Activated CD8-positive, alpha-beta memory T cell treated with anti-CD3 and anti-CD28 coated beads, Interleukin-2, amount 10 ng/mL, durations not matched to agents 7 days and 5 days (primary cell): ENCODE measurements at regions of chr4 and their contacts with region 1.

Region 1: GRCh38 chr4:6673660-6674499 is 19.8 kb upstream of the S100P start:
- DNase-seq: peak; percentile 96
- ATAC-seq: peak; percentile 79
- H3K4me3 Mint-ChIP-seq: peak overlapping the region; percentile 91
- H3K27ac Mint-ChIP-seq: peak overlapping the region; percentile 98
- H3K4me1 Mint-ChIP-seq: peaks cover 47% of the 10 kb centered on the region
- H3K27me3 Mint-ChIP-seq: no peaks in the 10 kb centered on the region

Region 2: DNA sequence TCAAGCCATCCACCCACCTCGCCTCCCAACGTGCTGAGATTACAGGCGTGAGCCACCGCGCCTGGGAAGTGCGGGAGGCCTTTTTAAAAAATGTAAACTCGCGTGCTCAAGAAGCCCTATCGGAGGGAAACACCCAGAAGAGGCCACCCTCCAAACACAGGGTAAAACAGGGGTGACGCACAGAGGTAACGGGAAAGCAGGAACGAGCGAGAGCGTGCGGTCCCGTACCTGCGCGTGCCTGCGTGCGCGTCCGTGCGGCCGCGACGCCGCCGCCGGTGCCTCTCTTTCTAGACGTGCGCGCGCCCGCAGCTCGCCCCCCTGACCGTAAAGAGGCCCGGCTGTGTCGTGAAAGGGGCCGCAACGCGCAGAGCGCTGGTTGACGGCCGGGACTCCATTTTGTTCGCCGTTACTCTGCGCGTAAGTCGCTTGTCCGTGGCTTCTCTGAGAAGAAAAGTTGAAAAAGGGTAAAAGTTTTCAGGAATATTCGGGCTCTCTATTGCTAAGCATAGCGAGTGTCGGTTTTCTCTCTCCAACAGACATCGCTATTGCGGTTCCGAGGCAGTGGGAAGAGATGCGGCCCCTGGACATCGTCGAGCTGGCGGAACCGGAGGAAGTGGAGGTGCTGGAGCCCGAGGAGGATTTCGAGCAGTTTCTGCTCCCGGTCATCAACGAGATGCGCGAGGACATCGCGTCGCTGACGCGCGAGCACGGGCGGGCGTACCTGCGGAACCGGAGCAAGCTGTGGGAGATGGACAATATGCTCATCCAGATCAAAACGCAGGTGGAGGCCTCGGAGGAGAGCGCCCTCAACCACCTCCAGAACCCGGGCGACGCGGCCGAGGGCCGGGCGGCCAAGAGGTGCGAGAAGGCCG is 33.4 kb before region 1 on chr4 and contains the start of gene MRFAP1:
- CTCF ChIA-PET with region 1: interaction called, 29 read pairs
- DNase-seq: peak; percentile 96
- ATAC-seq: peak; percentile 83
- H3K4me3 Mint-ChIP-seq: peak within 1 kb of the TSS; percentile 99
- H3K27ac Mint-ChIP-seq: peak within 1 kb of the TSS; percentile 100
- H3K4me1 Mint-ChIP-seq: peaks cover 23% of the 10 kb centered on the region
- H3K27me3 Mint-ChIP-seq: no peaks in the 10 kb centered on the region
- total RNA-seq, gene MRFAP1: 109 to 122 TPM

Region 3: GRCh38 chr4:6663596-6664393 is 10.1 kb before region 1 on chr4:
- CTCF ChIA-PET with region 1: interaction called, 16 read pairs
- DNase-seq: no peak
- ATAC-seq: no peak
- H3K4me3 Mint-ChIP-seq: no peak overlapping the region
- H3K27ac Mint-ChIP-seq: no peak overlapping the region
- H3K4me1 Mint-ChIP-seq: peaks cover 5% of the 10 kb centered on the region
- H3K27me3 Mint-ChIP-seq: peaks cover 43% of the 10 kb centered on the region

Region 4: DNA sequence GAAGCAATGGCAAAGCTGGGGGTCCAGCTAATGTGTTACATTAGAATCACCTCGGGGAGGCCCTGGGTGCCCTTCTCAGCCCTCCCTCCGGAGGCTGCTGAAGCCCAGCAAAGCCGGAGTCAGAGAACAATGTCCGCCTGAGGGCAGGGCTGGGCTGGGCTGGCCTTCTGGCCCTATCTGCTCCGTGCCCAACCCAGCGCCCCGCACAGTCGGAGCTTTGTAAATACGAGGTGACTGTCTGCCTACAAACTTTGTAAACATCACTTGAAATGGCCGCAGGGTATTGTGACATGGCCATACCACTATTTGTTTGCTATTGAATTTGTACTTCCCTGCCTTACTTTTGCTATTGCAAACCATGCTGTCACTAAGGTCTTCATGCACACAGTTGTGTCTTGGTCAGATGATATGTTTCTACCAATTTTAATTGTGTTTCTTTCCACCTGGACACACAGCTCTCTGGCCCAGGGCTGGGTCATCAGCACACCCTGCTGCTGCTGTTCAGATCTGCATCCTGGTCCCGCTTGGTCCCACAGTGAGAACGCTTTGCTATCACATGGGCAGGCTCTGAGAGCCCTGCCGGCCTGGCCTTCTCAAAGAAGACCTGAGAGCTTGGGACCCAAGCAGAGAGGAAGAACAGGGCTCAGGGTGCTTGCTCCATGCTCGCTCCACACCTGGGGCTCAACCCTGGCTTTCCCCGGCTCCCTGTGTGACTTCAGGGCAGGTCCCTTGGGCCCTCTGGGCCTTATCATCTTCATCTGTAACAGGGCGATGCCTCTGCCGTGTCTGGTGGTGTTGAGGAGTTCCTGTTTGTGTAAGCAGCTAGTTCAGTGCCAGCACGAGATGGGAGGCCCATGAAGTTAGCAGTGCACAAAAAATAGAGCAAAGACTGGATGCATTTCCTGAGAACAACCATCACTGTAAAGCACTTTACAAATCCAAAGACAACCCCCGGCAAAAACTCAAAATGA is 22.1 kb after region 1 on chr4:
- CTCF ChIA-PET with region 1: interaction called, 104 read pairs
- DNase-seq: peak; percentile 80
- ATAC-seq: peak; percentile 84
- H3K4me3 Mint-ChIP-seq: peak overlapping the region; percentile 30
- H3K27ac Mint-ChIP-seq: peak overlapping the region; percentile 98
- H3K4me1 Mint-ChIP-seq: peaks cover 79% of the 10 kb centered on the region
- H3K27me3 Mint-ChIP-seq: no peaks in the 10 kb centered on the region

Region 5: GRCh38 chr4:6709230-6710114 is 35.6 kb after region 1 on chr4 and contains the start of gene MRFAP1L1:
- CTCF ChIA-PET with region 1: interaction called, 87 read pairs
- DNase-seq: peak; percentile 98
- ATAC-seq: peak; percentile 86
- H3K4me3 Mint-ChIP-seq: peak within 1 kb of the TSS; percentile 93
- H3K27ac Mint-ChIP-seq: peak within 1 kb of the TSS; percentile 98
- H3K4me1 Mint-ChIP-seq: peaks cover 52% of the 10 kb centered on the region
- H3K27me3 Mint-ChIP-seq: no peaks in the 10 kb centered on the region
- total RNA-seq, gene MRFAP1L1: 60.7 to 61.9 TPM

Region 6: GRCh38 chr4:7042697-7043464 is 369.0 kb after region 1 on chr4 and contains the start of gene TADA2B:
- CTCF ChIA-PET with region 1: interaction called, 10 read pairs
- DNase-seq: peak; percentile 95
- ATAC-seq: peak; percentile 91
- H3K4me3 Mint-ChIP-seq: peak within 1 kb of the TSS; percentile 84
- H3K27ac Mint-ChIP-seq: peak within 1 kb of the TSS; percentile 72
- H3K4me1 Mint-ChIP-seq: peaks cover 40% of the 10 kb centered on the region
- H3K27me3 Mint-ChIP-seq: peaks cover 11% of the 10 kb centered on the region
- total RNA-seq, gene TADA2B: 16.9 to 21.4 TPM